Caco-2 (cell line): ENCODE measurements at regions of chr21 and their contacts with region 1.

Region 1: GRCh38 chr21:33266050-33266788 is at the start of gene IL10RB:
- DNase-seq: peak; percentile 58 to 79
- H3K4me3 ChIP-seq: peak within 1 kb of the TSS; percentile 75
- H3K4me3 Mint-ChIP-seq: peak within 1 kb of the TSS; percentile 97
- H3K27ac Mint-ChIP-seq: peak within 1 kb of the TSS; percentile 91
- H3K4me1 ChIP-seq: peaks cover 15% of the 10 kb centered on the region
- H3K4me1 Mint-ChIP-seq: peaks cover 32% of the 10 kb centered on the region
- H3K27me3 ChIP-seq: no peaks in the 10 kb centered on the region
- H3K27me3 Mint-ChIP-seq: no peaks in the 10 kb centered on the region
- CTCF ChIP-seq: no peak
- total RNA-seq, gene IL10RB: 11.7 and 13.1 TPM in 2 replicates

Region 2: DNA sequence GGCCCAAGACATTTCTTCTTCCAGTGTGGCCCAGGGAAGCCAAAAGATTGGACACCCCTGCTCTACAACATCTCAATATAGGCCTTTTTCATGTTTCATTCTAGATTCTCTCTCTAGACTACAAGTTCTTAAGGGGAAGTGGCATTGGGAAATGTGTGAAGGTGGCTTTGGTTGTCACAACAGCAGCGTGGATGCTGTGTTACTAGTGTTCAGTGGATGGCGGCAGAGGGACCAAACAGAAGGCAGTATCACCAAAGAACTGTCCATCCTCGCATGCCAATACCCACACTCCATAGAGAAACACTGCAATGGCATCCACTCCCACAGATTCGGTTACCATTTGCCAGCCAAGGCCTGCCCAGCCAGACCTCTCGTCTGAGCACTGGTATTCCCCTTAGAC is 60.7 kb before region 1 on chr21:
- CTCF ChIA-PET with region 1: no interaction called
- POLR2A ChIA-PET with region 1: interaction called, 4 read pairs
- intact Hi-C with region 1: loop called (anchors 2 kb)
- DNase-seq: no peak
- H3K4me3 ChIP-seq: no peak overlapping the region
- H3K4me3 Mint-ChIP-seq: peak overlapping the region; percentile 60
- H3K27ac Mint-ChIP-seq: peak overlapping the region; percentile 77
- H3K4me1 ChIP-seq: peaks cover 33% of the 10 kb centered on the region
- H3K4me1 Mint-ChIP-seq: peaks cover 36% of the 10 kb centered on the region
- H3K27me3 ChIP-seq: no peaks in the 10 kb centered on the region
- H3K27me3 Mint-ChIP-seq: no peaks in the 10 kb centered on the region
- CTCF ChIP-seq: no peak

Region 3: DNA sequence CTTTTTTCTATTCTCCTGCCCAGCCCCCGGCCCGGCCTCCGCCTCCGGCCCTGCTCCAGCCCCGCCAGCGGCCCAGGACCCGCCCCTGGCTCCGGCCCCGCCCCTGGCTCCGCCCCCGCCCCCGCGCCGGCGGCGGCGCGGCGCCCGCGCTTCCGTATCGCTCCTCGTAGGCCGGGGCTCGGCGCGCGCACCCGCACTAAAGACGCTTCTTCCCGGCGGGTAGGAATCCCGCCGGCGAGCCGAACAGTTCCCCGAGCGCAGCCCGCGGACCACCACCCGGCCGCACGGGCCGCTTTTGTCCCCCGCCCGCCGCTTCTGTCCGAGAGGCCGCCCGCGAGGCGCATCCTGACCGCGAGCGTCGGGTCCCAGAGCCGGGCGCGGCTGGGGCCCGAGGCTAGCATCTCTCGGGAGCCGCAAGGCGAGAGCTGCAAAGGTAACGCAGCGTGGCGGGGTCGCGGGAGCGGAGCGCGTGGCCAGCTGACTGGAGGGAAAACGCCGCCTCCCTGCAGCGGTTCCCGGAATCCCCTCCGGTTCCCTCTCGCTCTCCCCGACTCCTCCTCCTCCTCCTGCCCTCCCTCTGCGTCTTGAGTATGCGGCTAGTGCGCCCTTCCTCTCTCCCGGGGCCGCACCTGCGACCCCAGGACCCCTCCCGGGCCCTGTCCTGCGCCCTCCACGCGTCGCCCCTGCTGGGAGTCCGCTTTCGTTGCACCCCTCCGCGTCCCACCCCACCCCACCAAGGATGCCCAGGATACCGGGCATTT is 36.3 kb before region 1 on chr21 and contains the start of gene IFNAR2:
- CTCF ChIA-PET with region 1: no interaction called
- POLR2A ChIA-PET with region 1: interaction called, 5 read pairs
- intact Hi-C with region 1: loop called (anchors 1 kb)
- DNase-seq: peak; percentile 84
- H3K4me3 ChIP-seq: peak within 1 kb of the TSS; percentile 93
- H3K4me3 Mint-ChIP-seq: peak within 1 kb of the TSS; percentile 87
- H3K27ac Mint-ChIP-seq: peak within 1 kb of the TSS; percentile 64
- H3K4me1 ChIP-seq: peaks cover 62% of the 10 kb centered on the region
- H3K4me1 Mint-ChIP-seq: peaks cover 55% of the 10 kb centered on the region
- H3K27me3 ChIP-seq: no peaks in the 10 kb centered on the region
- H3K27me3 Mint-ChIP-seq: no peaks in the 10 kb centered on the region
- CTCF ChIP-seq: no peak
- total RNA-seq, gene IFNAR2: 33.7 and 36.1 TPM in 2 replicates

Region 4: GRCh38 chr21:33324291-33325221 is 58.3 kb after region 1 on chr21 and contains the start of gene IFNAR1:
- CTCF ChIA-PET with region 1: interaction called, 4 read pairs
- POLR2A ChIA-PET with region 1: no interaction called
- intact Hi-C with region 1: loop called (anchors 10 kb)
- DNase-seq: peak; percentile 94 to 96
- H3K4me3 ChIP-seq: peak within 1 kb of the TSS; percentile 70
- H3K4me3 Mint-ChIP-seq: no peak within 1 kb of the TSS
- H3K27ac Mint-ChIP-seq: no peak within 1 kb of the TSS
- H3K4me1 ChIP-seq: no peaks in the 10 kb centered on the region
- H3K4me1 Mint-ChIP-seq: no peaks in the 10 kb centered on the region
- H3K27me3 ChIP-seq: no peaks in the 10 kb centered on the region
- H3K27me3 Mint-ChIP-seq: peaks cover 2% of the 10 kb centered on the region
- CTCF ChIP-seq: no peak
- total RNA-seq, gene IFNAR1: 19.7 and 20.4 TPM in 2 replicates

Region 5: DNA sequence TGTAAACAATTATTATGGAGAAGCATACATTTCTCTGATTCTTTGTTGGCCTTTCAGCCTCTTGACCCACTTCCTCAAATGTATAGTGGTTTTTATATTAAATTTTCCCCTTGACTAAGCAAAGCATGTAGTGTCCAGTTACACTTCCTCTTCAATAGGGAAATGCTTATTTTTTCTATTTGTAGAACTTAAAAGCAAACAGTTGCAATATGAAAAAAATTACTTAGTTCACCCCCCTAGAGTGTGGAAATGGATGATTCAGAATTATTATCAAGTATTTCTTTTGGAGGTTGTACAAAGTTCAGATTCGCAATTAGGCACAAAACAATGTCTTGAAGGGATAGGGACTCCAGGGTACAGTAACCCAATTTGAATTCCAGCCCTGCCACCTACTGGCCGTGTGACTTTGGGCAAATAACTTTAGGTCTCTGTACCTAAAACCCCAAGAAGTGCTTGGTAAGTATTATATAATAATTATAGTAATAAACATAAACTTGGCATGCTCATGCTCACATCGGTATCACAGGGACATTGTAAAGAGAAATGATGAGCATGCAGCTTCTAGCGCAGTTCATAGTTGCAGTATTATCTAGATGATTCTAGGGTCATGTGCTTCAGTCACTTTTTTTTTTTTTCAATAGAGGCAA is 108.4 kb after region 1 on chr21:
- CTCF ChIA-PET with region 1: no interaction called
- POLR2A ChIA-PET with region 1: no interaction called
- intact Hi-C with region 1: loop called (anchors 5 kb)
- DNase-seq: peak; percentile 43 to 46
- H3K4me3 ChIP-seq: no peak overlapping the region
- H3K4me3 Mint-ChIP-seq: no peak overlapping the region
- H3K27ac Mint-ChIP-seq: no peak overlapping the region
- H3K4me1 ChIP-seq: peaks cover 6% of the 10 kb centered on the region; the same call in 1 of the 2 replicates
- H3K4me1 Mint-ChIP-seq: no peaks in the 10 kb centered on the region
- H3K27me3 ChIP-seq: no peaks in the 10 kb centered on the region
- H3K27me3 Mint-ChIP-seq: no peaks in the 10 kb centered on the region
- CTCF ChIP-seq: peak; percentile 65 to 69